A673 (cell line): ENCODE measurements at regions of chr2 and their contacts with region 1.

Region 1: GRCh38 chr2:100629309-100629708 is 66.5 kb downstream of the PDCL3 start:
- DNase-seq: no peak
- H3K4me3 ChIP-seq: no peak overlapping the region
- H3K27ac ChIP-seq: no peak overlapping the region
- H3K4me1 ChIP-seq: no peaks in the 10 kb centered on the region
- H3K27me3 ChIP-seq: peaks cover 3% of the 10 kb centered on the region
- CTCF ChIP-seq: no peak

Region 2: DNA sequence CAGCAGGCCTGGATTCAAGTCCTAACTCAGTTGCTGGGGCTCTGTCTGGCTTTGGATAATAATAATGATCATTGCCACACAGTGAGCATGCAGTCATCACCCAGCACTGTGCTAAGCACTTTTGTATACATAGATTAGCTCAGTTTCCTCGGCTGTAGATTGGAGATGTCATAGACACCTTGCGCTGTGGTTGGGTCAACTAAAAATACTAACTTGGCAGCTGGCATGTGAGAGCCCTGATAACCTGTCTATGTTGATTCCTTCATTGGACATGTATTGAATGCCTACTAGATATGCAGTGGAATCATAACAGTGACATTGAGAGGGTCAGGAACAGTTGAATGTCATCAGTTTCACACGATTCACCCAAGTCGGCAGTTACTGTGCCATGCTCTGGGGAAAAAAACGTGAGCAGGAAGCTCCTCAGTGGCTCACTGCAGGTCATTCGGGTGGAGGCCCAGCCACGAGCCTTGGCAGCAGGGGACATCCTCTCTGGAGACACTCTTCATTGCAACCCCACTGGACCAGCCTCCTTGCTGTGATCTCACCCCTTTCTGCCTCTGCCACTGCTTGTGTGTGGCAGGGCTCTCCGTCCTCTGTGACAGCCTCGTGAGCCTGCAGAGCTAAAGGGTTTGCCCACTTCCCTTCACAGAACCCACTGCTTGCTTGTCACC is 276.0 kb after region 1 on chr2:
- CTCF ChIA-PET with region 1: interaction called, 14 read pairs
- POLR2A ChIA-PET with region 1: no interaction called
- intact Hi-C with region 1: no loop called
- DNase-seq: no peak
- H3K4me3 ChIP-seq: no peak overlapping the region
- H3K27ac ChIP-seq: no peak overlapping the region
- H3K4me1 ChIP-seq: peaks cover 37% of the 10 kb centered on the region
- H3K27me3 ChIP-seq: no peaks in the 10 kb centered on the region
- CTCF ChIP-seq: no peak